ENCODE measurements at regions of chr1 and their contacts with region 1.

Region 1: GRCh38 chr1:198520524-198521254 is 19.8 kb downstream of the ATP6V1G3 start:
- DNase-seq: peak in 2 of 9 experiments; percentile 57 to 73
- ATAC-seq: peak; percentile 57
- H3K4me3 ChIP-seq: peak overlapping the region; percentile 11 to 30
- H3K4me3 Mint-ChIP-seq: peak overlapping the region; percentile 72
- H3K27ac ChIP-seq: peak overlapping the region; percentile 6 to 75
- H3K27ac Mint-ChIP-seq: peak overlapping the region; percentile 89
- H3K4me1 ChIP-seq: peaks cover 58% of the 10 kb centered on the region
- H3K4me1 Mint-ChIP-seq: peaks cover 72% of the 10 kb centered on the region
- H3K27me3 ChIP-seq: no peaks in the 10 kb centered on the region
- H3K27me3 Mint-ChIP-seq: no peaks in the 10 kb centered on the region
- CTCF ChIP-seq: no peak

Region 2: DNA sequence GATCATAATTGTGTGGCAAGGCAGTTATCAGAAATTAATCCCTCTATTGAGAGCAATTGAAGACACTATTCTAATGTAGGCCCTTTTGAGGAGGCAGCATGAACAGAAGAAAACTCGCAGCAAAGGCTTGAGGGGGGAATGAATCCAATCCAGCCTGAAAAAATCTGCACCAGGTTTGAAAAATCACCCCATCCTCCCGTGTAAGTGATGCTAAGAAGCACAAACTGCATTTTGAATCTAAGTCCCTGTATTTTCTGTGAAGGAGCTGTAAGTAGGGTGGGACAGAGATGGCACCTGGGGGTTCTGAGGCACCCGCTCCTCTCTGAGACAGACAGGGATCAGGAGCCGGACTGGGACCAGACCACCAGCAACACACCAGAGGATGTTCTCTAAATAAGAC is 1252.7 kb before region 1 on chr1 and contains the start of gene CRB1:
- CTCF ChIA-PET with region 1: no interaction called
- POLR2A ChIA-PET with region 1: no interaction called
- intact Hi-C with region 1: no loop called
- DNase-seq: peak in 1 of 9 experiments; percentile 2
- ATAC-seq: no peak
- H3K4me3 ChIP-seq: no peak within 1 kb of the TSS
- H3K4me3 Mint-ChIP-seq: no peak within 1 kb of the TSS
- H3K27ac ChIP-seq: no peak within 1 kb of the TSS
- H3K27ac Mint-ChIP-seq: no peak within 1 kb of the TSS
- H3K4me1 ChIP-seq: no peaks in the 10 kb centered on the region
- H3K4me1 Mint-ChIP-seq: no peaks in the 10 kb centered on the region
- H3K27me3 ChIP-seq: no peaks in the 10 kb centered on the region
- H3K27me3 Mint-ChIP-seq: peaks cover 2% of the 10 kb centered on the region
- CTCF ChIP-seq: no peak
- total RNA-seq, gene CRB1: 0.81 TPM in 1 of 2 experiments, not detected in the other

Region 3: GRCh38 chr1:198187973-198188588 is 332.6 kb before region 1 on chr1:
- CTCF ChIA-PET with region 1: no interaction called
- POLR2A ChIA-PET with region 1: no interaction called
- intact Hi-C with region 1: loop called in 1 of 2 experiments (anchors 10 kb)
- DNase-seq: peak in 6 of 9 experiments; percentile 27 to 79 (median 45)
- ATAC-seq: peak; percentile 87
- H3K4me3 ChIP-seq: no peak overlapping the region
- H3K4me3 Mint-ChIP-seq: peak overlapping the region; percentile 23
- H3K27ac ChIP-seq: peak overlapping the region in 1 of 2 experiments; percentile 78
- H3K27ac Mint-ChIP-seq: peak overlapping the region; percentile 81
- H3K4me1 ChIP-seq: peaks cover 64% of the 10 kb centered on the region
- H3K4me1 Mint-ChIP-seq: peaks cover 83% of the 10 kb centered on the region
- H3K27me3 ChIP-seq: no peaks in the 10 kb centered on the region
- H3K27me3 Mint-ChIP-seq: no peaks in the 10 kb centered on the region
- CTCF ChIP-seq: no peak

Region 4: GRCh38 chr1:198534548-198535418 is 14.1 kb after region 1 on chr1:
- CTCF ChIA-PET with region 1: interaction called, 7 read pairs
- POLR2A ChIA-PET with region 1: interaction called, 3 read pairs
- intact Hi-C with region 1: loop called in 1 of 2 experiments (anchors 2 kb)
- DNase-seq: peak in 1 of 9 experiments; percentile 34
- ATAC-seq: peak; percentile 48
- H3K4me3 ChIP-seq: peak overlapping the region in 1 of 2 experiments; percentile 6
- H3K4me3 Mint-ChIP-seq: peak overlapping the region; percentile 67
- H3K27ac ChIP-seq: peak overlapping the region; percentile 43 to 68
- H3K27ac Mint-ChIP-seq: peak overlapping the region; percentile 93
- H3K4me1 ChIP-seq: peaks cover 67% of the 10 kb centered on the region
- H3K4me1 Mint-ChIP-seq: peaks cover 78% of the 10 kb centered on the region
- H3K27me3 ChIP-seq: no peaks in the 10 kb centered on the region
- H3K27me3 Mint-ChIP-seq: no peaks in the 10 kb centered on the region
- CTCF ChIP-seq: no peak

Region 5: GRCh38 chr1:198564716-198565115 is 44.0 kb after region 1 on chr1:
- CTCF ChIA-PET with region 1: interaction called, 4 read pairs
- POLR2A ChIA-PET with region 1: no interaction called
- intact Hi-C with region 1: loop called (anchors 2 to 5 kb)
- DNase-seq: peak in 6 of 9 experiments; percentile 3 to 75 (median 20)
- ATAC-seq: peak; percentile 89
- H3K4me3 ChIP-seq: peak overlapping the region in 1 of 2 experiments; percentile 12
- H3K4me3 Mint-ChIP-seq: no peak overlapping the region
- H3K27ac ChIP-seq: peak overlapping the region in 1 of 2 experiments; percentile 43
- H3K27ac Mint-ChIP-seq: peak overlapping the region; percentile 74
- H3K4me1 ChIP-seq: peaks cover 45% of the 10 kb centered on the region
- H3K4me1 Mint-ChIP-seq: peaks cover 53% of the 10 kb centered on the region
- H3K27me3 ChIP-seq: no peaks in the 10 kb centered on the region
- H3K27me3 Mint-ChIP-seq: no peaks in the 10 kb centered on the region
- CTCF ChIP-seq: no peak

Region 6: GRCh38 chr1:198612471-198613260 is 92.0 kb after region 1 on chr1:
- CTCF ChIA-PET with region 1: interaction called, 12 read pairs
- POLR2A ChIA-PET with region 1: no interaction called
- intact Hi-C with region 1: loop called in 1 of 2 experiments (anchors 5 kb)
- DNase-seq: peak in 2 of 9 experiments; percentile 44 to 67
- ATAC-seq: peak; percentile 50
- H3K4me3 ChIP-seq: peak overlapping the region; percentile 13 to 42
- H3K4me3 Mint-ChIP-seq: peak overlapping the region; percentile 83
- H3K27ac ChIP-seq: peak overlapping the region; percentile 54 to 85
- H3K27ac Mint-ChIP-seq: peak overlapping the region; percentile 98
- H3K4me1 ChIP-seq: peaks cover 65% of the 10 kb centered on the region
- H3K4me1 Mint-ChIP-seq: peaks cover 76% of the 10 kb centered on the region
- H3K27me3 ChIP-seq: no peaks in the 10 kb centered on the region
- H3K27me3 Mint-ChIP-seq: no peaks in the 10 kb centered on the region
- CTCF ChIP-seq: no peak

Region 7: DNA sequence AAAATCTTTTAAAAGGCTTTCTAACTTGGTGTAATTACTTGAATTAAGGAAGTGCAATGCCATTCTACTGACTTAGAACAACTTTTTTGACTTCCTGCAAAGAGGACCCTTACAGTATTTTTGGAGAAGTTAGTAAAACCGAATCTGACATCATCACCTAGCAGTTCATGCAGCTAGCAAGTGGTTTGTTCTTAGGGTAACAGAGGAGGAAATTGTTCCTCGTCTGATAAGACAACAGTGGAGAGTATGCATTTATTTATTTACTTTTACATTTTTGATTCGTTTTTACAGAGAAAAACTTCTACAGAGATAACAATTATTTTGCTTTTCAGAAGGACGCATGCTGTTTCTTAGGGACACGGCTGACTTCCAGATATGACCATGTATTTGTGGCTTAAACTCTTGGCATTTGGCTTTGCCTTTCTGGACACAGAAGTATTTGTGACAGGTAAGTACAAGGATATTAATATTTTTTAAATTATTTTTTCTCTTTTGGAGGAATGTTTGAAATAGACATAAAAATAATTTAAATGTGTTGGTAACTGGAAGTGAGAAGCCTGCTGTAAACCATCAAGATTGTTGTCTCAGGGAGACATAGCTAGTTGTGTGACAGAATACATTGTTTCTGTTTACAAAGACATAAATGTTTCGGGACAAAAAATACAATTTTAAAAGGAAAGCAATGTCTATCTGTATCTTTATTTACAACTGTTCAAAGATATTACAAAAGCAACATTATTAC is 118.4 kb after region 1 on chr1 and contains the start of gene PTPRC:
- CTCF ChIA-PET with region 1: interaction called, 5 read pairs
- POLR2A ChIA-PET with region 1: interaction called, 5 read pairs
- intact Hi-C with region 1: loop called (anchors 1 to 5 kb)
- DNase-seq: peak in 2 of 9 experiments; percentile 67 to 85
- ATAC-seq: peak; percentile 79
- H3K4me3 ChIP-seq: peak within 1 kb of the TSS; percentile 76 to 83
- H3K4me3 Mint-ChIP-seq: peak within 1 kb of the TSS; percentile 85
- H3K27ac ChIP-seq: peak within 1 kb of the TSS; percentile 80 to 82
- H3K27ac Mint-ChIP-seq: peak within 1 kb of the TSS; percentile 92
- H3K4me1 ChIP-seq: peaks cover 45% of the 10 kb centered on the region
- H3K4me1 Mint-ChIP-seq: peaks cover 56% of the 10 kb centered on the region
- H3K27me3 ChIP-seq: no peaks in the 10 kb centered on the region
- H3K27me3 Mint-ChIP-seq: no peaks in the 10 kb centered on the region
- CTCF ChIP-seq: no peak
- total RNA-seq, gene PTPRC: 603 to 634 TPM

Region 8: DNA sequence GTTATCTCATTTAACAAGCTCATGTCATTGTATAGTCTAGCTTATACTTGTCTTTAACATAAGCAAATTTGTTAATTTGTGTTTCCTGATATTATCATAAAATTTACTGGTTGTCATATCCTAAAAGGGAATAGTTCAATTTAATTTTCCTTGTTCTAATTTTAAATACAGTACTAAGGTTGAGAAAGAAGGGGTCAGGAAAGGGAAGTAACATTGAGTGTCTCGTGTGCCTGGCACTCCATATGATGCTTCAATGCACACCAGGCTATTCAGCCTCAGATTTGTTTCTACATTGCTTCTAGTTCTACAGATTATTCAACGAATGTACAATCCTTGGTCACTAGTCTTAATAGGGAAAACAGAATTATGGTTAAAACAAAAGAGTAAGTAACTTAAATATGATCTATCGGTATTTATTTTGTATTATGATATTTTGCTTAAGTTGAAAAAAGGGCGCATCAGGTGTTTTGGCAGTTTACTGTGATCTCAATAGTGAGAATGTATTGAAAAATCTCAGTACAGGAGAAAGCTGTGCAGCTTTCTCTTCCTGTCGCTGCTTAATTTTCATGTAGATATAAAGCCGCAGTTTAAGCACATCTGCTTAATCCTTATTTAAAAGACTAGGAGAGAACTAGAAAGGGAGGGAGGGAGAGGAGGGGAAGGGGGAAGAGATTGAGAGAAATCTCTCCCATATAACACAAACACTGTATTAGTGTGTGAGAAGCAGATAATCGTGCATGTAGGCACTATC is 131.1 kb after region 1 on chr1:
- CTCF ChIA-PET with region 1: interaction called, 14 read pairs
- POLR2A ChIA-PET with region 1: interaction called, 3 read pairs
- intact Hi-C with region 1: loop called in 1 of 2 experiments (anchors 2 kb)
- DNase-seq: peak in 1 of 9 experiments; percentile 58
- ATAC-seq: peak; percentile 13
- H3K4me3 ChIP-seq: peak overlapping the region; percentile 29 to 30
- H3K4me3 Mint-ChIP-seq: peak overlapping the region; percentile 75
- H3K27ac ChIP-seq: peak overlapping the region; percentile 41 to 97
- H3K27ac Mint-ChIP-seq: peak overlapping the region; percentile 95
- H3K4me1 ChIP-seq: peaks cover 79% of the 10 kb centered on the region
- H3K4me1 Mint-ChIP-seq: peaks cover 73% of the 10 kb centered on the region
- H3K27me3 ChIP-seq: no peaks in the 10 kb centered on the region
- H3K27me3 Mint-ChIP-seq: no peaks in the 10 kb centered on the region
- CTCF ChIP-seq: no peak

Measured in CD8-positive, alpha-beta T cell (primary cell).